Breast epithelium (tissue), 4 donors: ENCODE measurements at regions of chr11 and their contacts with region 1.

Region 1: DNA sequence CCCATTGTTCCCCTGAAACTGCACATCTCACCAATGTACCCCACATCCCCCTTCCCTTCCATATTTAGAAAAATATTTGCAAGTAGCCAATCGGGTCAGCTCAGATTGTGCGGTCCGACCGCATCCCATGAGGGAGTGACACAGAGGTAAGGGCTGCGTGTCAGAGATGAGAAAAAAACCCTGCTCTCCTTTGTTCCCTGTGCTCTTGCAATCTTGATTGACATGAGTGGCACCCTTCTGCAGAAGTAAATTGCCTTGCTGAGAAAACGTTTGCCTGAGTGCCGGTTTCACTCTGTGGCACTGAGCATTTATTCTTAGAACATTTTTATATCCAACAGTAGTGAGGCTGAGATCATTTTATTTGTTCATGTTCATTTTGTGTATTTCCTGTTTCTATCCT is 81.6 kb upstream of the CCDC90B start:
- DNase-seq: no peak
- H3K4me3 ChIP-seq: no peak overlapping the region
- H3K27ac ChIP-seq: no peak overlapping the region
- H3K4me1 ChIP-seq: no peaks in the 10 kb centered on the region
- H3K27me3 ChIP-seq: no peaks in the 10 kb centered on the region
- CTCF ChIP-seq: no peak
- POLR2A ChIP-seq: no peak

Region 2: DNA sequence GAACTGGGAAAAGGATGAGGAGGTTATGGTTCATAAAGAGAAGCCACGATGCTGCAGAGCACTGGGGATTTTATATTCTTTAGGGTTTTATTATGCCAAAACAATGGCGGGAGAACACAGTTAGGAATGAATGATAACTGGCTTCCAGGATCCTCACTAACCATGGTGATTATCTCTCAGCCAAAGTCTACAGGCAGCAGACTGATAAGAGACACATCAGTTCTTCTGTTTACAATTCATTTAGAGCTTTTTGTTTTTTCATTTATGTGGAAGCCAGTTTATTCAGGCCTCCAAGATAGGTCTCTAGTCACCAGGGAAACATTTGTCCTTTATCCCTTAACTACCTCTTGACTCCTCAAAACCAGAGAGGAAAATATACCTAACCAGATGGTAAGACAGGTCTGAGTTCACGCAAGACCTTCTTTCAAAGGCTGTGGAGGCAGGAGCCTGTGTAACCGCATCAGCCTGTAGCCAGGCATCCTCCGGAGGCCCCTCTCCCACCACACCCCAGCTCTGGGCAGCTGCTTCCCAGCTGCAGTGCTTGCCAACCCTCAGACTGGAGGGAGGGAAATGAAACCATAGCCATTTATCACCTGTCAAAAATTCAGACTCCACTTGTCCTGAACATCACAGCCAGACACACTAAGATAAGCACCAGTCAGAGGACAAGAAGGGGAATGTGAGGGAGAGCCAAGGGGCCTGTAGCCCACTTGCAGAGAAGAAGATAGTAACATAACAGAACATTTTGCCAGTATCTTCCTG is 576.8 kb before region 1 on chr11:
- intact Hi-C with region 1: no loop called
- DNase-seq: no peak
- H3K4me3 ChIP-seq: no peak overlapping the region
- H3K27ac ChIP-seq: no peak overlapping the region
- H3K4me1 ChIP-seq: no peaks in the 10 kb centered on the region
- H3K27me3 ChIP-seq: no peaks in the 10 kb centered on the region
- CTCF ChIP-seq: no peak
- POLR2A ChIP-seq: no peak

Region 3: GRCh38 chr11:83394331-83394730 is 26.6 kb after region 1 on chr11:
- intact Hi-C with region 1: loop called (anchors 2 kb)
- DNase-seq: no peak
- H3K4me3 ChIP-seq: no peak overlapping the region
- H3K27ac ChIP-seq: no peak overlapping the region
- H3K4me1 ChIP-seq: no peaks in the 10 kb centered on the region
- H3K27me3 ChIP-seq: no peaks in the 10 kb centered on the region
- CTCF ChIP-seq: no peak
- POLR2A ChIP-seq: no peak

Region 4: DNA sequence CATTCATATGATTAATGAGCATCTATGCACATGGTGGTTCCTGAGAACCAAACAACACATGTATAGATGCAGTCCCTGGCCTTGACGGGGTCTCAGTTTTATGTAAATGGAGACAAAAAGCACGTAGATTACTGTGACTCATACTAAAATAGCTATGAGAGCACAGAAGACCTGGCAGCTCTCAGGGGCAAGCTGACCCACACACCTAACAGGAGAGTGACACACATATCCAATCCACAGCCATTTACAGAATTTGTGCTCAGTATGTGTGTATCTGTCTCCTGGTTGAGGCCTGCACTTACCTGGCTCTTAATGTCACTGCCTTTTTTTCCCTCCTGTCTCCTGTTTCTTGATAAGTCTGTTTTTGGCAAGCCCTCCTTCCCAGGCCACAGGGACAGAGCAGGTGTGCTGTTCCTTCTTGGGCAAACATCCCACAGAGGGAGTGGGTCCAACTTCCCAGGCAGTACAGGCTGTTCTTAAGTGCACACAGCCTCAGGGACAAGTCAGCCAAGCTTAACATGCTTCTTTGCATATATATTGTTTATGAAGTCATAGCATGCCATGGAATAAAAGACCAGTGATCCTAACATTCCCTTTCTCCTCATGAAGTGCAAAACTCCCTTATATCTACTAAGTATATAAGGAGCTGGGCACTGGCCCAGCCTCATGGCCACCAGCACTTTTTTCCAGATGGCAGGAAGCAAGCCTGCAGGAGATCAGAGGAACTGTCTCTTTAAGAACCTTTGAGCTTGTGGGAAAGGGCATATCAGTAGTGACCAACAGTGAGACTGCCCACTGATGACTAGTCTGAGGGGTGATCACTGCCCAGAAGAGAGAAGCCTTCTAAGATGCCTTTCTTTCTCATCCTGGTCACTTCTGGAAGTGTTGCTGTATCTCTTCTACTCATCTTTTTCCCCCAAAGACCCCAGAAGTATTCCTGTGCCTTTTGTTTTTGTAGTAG is 43.1 kb after region 1 on chr11:
- intact Hi-C with region 1: no loop called
- DNase-seq: peak in 1 of 2 donors; percentile 53
- H3K4me3 ChIP-seq: no peak overlapping the region
- H3K27ac ChIP-seq: peak overlapping the region in 1 of 2 donors; percentile 11
- H3K4me1 ChIP-seq: no peaks in the 10 kb centered on the region
- H3K27me3 ChIP-seq: no peaks in the 10 kb centered on the region
- CTCF ChIP-seq: no peak
- POLR2A ChIP-seq: no peak